PC-3 (cell line): ENCODE measurements at regions of chr11 and their contacts with region 1.

Region 1: DNA sequence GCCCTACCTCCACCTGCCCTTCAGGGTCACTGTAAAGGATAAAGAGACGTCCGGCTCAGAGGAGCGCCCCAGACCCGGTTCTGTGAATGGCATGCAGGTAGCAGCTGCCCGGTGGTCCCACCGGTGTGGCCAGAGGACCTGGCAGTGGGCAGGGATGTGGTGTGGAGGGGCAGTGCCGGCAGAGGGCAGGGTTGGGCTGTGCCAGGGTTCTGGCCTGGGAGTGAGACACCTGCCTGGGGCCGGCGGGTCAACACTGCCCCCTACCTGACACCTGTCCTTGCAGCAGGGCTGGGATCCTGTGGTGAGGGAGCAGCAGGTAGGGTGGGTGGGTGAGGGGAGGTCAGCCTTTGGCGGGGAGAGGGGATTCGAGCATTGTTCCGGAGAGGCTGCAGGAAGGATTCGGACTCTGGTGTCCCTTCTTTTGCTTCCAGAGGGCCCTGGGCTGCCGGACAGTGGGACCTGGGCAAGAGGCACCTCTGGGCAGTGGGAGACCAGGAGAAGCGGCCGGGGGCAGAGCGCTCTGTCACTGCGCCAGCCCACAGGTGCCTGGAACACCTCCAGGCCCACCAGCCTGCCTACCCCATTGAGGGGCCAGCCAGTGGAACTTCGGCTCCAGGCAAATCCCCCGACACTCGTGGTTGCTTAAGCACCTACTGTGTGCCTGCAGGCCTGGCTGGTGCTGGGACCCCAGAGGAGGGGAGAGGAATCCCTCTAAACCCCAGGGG is 1.6 kb upstream of the PHLDA2 start:
- DNase-seq: peak; percentile 84
- ATAC-seq: peak; percentile 45
- H3K4me3 ChIP-seq: peak overlapping the region; percentile 78
- H3K27ac ChIP-seq: peak overlapping the region; percentile 99
- H3K4me1 ChIP-seq: peaks cover 43% of the 10 kb centered on the region
- H3K27me3 ChIP-seq: no peaks in the 10 kb centered on the region
- CTCF ChIP-seq: peak; percentile 87

Region 2: GRCh38 chr11:2846056-2846455 is 84.8 kb before region 1 on chr11:
- CTCF ChIA-PET with region 1: no interaction called
- POLR2A ChIA-PET with region 1: no interaction called
- intact Hi-C with region 1: no loop called
- DNase-seq: no peak
- ATAC-seq: no peak
- H3K4me3 ChIP-seq: no peak overlapping the region
- H3K27ac ChIP-seq: no peak overlapping the region
- H3K4me1 ChIP-seq: peaks cover 14% of the 10 kb centered on the region
- H3K27me3 ChIP-seq: no peaks in the 10 kb centered on the region
- CTCF ChIP-seq: no peak

Region 3: GRCh38 chr11:2892215-2893020 is 38.4 kb before region 1 on chr11:
- CTCF ChIA-PET with region 1: interaction called, 21 read pairs
- POLR2A ChIA-PET with region 1: interaction called, 3 read pairs
- intact Hi-C with region 1: loop called (anchors 1 kb)
- DNase-seq: peak; percentile 59
- ATAC-seq: peak; percentile 54
- H3K4me3 ChIP-seq: peak overlapping the region; percentile 63
- H3K27ac ChIP-seq: peak overlapping the region; percentile 52
- H3K4me1 ChIP-seq: peaks cover 28% of the 10 kb centered on the region
- H3K27me3 ChIP-seq: no peaks in the 10 kb centered on the region
- CTCF ChIP-seq: peak; percentile 88

Region 4: GRCh38 chr11:2912498-2912897 is 18.4 kb before region 1 on chr11:
- CTCF ChIA-PET with region 1: no interaction called
- POLR2A ChIA-PET with region 1: no interaction called
- intact Hi-C with region 1: loop called (anchors 2 kb)
- DNase-seq: peak; percentile 96
- ATAC-seq: peak; percentile 96
- H3K4me3 ChIP-seq: peak overlapping the region; percentile 57
- H3K27ac ChIP-seq: peak overlapping the region; percentile 86
- H3K4me1 ChIP-seq: peaks cover 27% of the 10 kb centered on the region
- H3K27me3 ChIP-seq: no peaks in the 10 kb centered on the region
- CTCF ChIP-seq: no peak

Region 5: DNA sequence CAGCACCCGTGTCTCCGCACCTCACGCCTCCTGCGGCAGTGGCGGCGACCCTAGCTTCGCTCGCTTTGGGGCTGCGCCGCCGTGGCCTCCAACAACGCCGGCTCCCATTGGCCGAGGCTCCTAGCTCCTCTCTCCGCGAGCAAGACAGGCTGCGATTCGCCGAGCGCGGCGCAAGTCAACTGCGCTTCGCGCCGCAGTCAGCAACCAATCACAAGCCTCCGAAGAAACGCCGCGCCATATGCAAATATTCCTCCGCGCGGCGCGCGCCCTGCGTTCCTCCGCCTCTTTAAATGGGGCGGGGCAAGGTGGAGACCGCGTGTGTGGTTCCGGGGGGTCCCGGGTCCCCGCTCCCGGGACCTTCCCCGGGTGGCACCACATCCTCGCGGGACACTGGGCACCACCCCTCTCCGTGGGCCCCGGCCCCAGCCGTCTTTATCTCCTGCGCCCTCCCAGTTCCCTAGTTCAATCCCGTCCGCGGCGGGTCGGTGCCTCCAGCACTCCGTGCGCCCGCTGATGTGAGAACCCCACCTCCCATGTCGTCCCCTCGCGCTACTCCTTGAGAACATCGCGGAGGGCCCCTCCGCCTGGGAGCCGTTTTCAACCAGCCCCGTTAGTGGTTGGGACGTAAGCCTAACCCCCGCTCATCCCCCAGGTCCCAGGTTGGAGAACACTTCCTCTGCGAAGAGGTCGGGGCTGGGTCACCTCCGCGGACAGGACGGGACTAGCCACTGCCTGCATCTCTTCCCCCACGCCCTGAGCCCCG is 61.5 kb after region 1 on chr11 and contains the start of gene NAP1L4:
- CTCF ChIA-PET with region 1: interaction called, 17 read pairs
- POLR2A ChIA-PET with region 1: interaction called, 8 read pairs
- intact Hi-C with region 1: no loop called
- DNase-seq: peak; percentile 98
- ATAC-seq: peak; percentile 82
- H3K4me3 ChIP-seq: peak within 1 kb of the TSS; percentile 94
- H3K27ac ChIP-seq: peak within 1 kb of the TSS; percentile 61
- H3K4me1 ChIP-seq: peaks cover 23% of the 10 kb centered on the region
- H3K27me3 ChIP-seq: no peaks in the 10 kb centered on the region
- CTCF ChIP-seq: no peak
- total RNA-seq, gene NAP1L4: 115 and 160 TPM in 2 replicates